ENCODE measurements at regions of chr12 and their contacts with region 1.

Region 1: GRCh38 chr12:54032627-54033100 is at the start of gene HOXC5:
- DNase-seq: peak in 1 of 2 donors; percentile 79
- ATAC-seq: peak; percentile 73
- H3K4me3 ChIP-seq: peak within 1 kb of the TSS; percentile 28 to 45
- H3K27ac ChIP-seq: no peak within 1 kb of the TSS
- H3K4me1 ChIP-seq: no peaks in the 10 kb centered on the region
- H3K27me3 ChIP-seq: peaks cover 0 to 2% of the 10 kb centered on the region in 2 donors
- total RNA-seq, gene HOXC5: 3.8 to 3.9 TPM

Region 2: DNA sequence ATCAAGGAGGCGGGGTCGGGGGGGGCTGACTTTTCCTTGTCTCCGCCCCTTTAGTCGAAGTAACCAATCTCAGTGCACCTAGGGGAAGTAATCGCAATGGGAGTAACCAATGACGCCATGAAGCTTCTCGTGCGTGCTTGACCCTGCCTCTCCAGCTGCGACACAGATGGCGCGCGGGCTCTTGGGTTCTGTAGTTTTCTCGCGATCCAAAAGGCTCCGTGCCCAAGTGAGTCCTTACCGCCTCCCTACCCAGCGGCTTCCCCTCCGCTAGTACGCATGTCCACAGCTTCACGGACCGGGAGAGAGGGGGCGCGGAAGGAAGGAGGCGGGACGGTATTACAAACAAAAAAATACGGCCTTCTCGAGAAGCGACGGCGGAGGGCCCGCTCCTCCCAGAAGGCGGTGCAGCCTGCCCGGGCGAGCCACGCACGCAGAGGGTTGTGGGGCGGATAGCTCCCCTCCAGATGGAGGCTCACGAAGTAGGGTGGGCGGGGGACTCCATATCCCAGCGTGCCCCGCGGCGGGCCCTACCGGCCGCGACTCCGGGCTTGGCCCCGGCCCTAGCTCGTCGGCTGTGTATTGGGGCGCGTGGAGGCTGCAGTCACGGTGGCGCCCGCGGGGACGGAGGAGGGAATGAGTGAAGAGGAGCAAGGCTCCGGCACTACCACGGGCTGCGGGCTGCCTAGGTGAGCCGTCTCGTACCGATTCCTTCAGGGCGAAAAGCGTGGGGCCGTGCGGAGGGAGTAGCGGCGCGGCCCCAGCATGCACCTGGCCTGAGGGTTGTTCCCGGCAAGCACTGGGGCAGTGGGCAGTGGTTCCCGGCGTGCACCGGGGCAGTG is 531.7 kb before region 1 on chr12 and contains the start of gene TARBP2:
- intact Hi-C with region 1: no loop called
- DNase-seq: peak; percentile 97 to 98
- ATAC-seq: peak; percentile 93
- H3K4me3 ChIP-seq: peak within 1 kb of the TSS; percentile 31 to 68
- H3K27ac ChIP-seq: peak within 1 kb of the TSS; percentile 94 to 99
- H3K4me1 ChIP-seq: no peaks in the 10 kb centered on the region
- H3K27me3 ChIP-seq: no peaks in the 10 kb centered on the region
- total RNA-seq, gene TARBP2: 11.5 to 22.5 TPM

Region 3: DNA sequence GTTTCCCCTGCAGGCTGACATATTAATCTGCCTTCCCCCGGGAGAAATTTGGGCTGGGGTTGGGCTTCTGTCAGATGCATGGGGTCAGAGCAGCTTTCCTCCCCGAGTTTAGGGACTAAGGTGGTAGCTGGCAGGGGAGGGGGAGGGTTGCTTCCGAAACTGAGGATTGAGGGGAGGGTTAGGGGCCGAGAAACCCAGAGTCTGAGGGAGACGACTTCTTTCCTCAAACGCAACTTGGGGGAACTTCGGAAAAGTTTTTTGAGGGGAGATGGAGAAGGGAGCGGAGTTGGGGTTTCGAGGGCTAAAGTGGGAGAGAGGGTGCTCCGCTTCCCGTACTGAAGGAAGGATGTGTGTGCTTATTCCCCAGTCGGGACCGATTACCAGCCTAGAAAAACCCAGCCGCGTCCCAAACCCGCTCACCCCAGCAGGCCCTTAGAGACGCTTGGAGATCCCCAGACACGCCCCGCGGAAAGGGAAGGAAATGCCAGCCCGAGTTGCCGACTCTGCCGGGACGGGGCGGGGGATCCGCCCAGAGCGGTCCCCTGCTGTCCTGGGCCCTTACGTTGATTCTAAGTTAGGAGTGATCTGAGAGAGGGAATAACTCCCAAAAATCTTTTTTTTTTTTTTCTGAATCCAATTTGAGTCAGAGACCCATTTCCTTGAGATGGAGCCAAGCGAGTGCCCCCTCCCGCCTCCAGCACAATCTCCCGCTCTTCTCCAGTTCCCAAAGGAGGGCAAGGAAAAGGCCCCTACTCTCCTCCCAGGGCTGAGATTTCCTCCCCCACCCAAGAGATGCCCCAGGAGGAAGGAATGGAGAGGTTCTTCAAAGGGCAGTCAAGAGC is 94.3 kb after region 1 on chr12:
- intact Hi-C with region 1: loop called in 1 of 2 experiments (anchors 5 kb)
- DNase-seq: peak; percentile 91 to 93
- ATAC-seq: peak; percentile 91
- H3K4me3 ChIP-seq: peak overlapping the region; percentile 76 to 85
- H3K27ac ChIP-seq: peak overlapping the region; percentile 31 to 67
- H3K4me1 ChIP-seq: no peaks in the 10 kb centered on the region
- H3K27me3 ChIP-seq: no peaks in the 10 kb centered on the region

Region 4: DNA sequence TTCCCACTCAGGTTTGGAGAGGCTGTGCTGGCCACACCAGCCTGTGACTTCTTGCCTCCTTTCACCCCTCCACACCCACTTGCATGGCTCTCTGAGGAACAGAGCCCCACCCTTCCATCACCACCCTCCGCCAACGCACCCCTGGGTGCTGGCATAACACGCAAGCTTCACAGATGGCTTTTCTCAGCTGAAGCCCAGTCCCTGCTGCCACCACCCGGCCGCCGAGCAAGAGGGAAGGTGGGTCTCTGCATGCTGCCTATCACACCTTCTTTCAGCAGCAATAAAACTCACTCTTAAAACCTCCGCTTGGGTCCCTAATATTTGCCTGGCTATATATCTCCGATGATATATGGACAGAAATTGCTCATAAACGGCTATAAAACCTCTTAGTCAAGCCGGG is 114.5 kb after region 1 on chr12:
- intact Hi-C with region 1: loop called (anchors 2 to 5 kb)
- DNase-seq: peak in 1 of 2 donors; percentile 87
- ATAC-seq: no peak
- H3K4me3 ChIP-seq: no peak overlapping the region
- H3K27ac ChIP-seq: no peak overlapping the region
- H3K4me1 ChIP-seq: no peaks in the 10 kb centered on the region
- H3K27me3 ChIP-seq: no peaks in the 10 kb centered on the region

Region 5: DNA sequence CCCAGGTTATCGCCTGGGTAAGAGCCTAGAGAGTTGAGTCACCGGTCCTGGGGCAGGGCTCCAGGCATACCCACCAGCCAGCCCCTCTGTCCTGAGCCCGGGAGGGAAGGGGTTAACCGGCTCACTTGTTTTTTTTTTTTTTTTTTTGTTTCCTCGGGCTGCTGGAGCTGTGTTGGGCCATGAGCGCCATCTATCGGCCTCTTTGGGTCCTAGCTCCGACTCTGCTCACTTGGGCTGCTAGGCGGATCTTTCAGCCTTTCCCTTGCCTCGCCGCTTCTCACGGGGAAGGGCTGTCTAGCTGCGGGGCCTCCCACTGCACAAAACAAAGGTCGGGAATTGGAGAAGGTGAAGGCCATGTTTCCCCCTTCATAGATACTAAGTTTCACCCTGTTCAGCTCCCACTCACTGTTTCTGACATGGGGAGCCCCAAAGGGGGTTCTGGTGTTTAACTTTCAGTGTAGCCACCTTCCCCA is 158.9 kb after region 1 on chr12:
- intact Hi-C with region 1: loop called (anchors 2 kb)
- DNase-seq: peak; percentile 87 to 92
- ATAC-seq: peak; percentile 88
- H3K4me3 ChIP-seq: no peak overlapping the region
- H3K27ac ChIP-seq: no peak overlapping the region
- H3K4me1 ChIP-seq: no peaks in the 10 kb centered on the region
- H3K27me3 ChIP-seq: no peaks in the 10 kb centered on the region

Measured in aorta (tissue), 5 donors.